Heart left ventricle (tissue), 16 donors: ENCODE measurements at regions of chr6 and their contacts with region 1.

Region 1: DNA sequence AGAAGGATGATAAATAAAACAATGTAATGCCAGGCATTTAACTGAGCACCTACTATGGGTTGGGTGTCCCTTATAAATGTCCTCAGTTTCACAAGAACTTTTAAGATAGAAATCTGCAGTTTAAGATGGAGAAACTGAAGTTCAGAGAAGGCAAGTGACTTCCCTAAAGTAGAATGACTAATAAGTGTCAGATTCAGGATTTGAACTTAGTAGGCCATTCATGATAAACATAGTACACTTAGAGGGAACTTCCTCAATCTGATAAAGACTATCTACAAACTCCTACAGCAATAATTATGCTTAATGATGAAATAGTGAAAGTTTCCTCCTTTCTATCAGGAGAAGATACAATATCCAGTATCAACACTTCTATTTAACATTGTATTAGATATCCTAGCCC is 43.9 kb downstream of the NCR2 start:
- DNase-seq: no peak
- ATAC-seq: no peak
- H3K4me3 ChIP-seq: no peak overlapping the region
- H3K27ac ChIP-seq: no peak overlapping the region
- H3K4me1 ChIP-seq: peaks cover 0 to 16% (median 8%) of the 10 kb centered on the region in 12 donors
- H3K27me3 ChIP-seq: peaks cover 12 to 70% (median 15%) of the 10 kb centered on the region in 9 donors
- CTCF ChIP-seq: no peak
- POLR2A ChIP-seq: no peak

Region 2: DNA sequence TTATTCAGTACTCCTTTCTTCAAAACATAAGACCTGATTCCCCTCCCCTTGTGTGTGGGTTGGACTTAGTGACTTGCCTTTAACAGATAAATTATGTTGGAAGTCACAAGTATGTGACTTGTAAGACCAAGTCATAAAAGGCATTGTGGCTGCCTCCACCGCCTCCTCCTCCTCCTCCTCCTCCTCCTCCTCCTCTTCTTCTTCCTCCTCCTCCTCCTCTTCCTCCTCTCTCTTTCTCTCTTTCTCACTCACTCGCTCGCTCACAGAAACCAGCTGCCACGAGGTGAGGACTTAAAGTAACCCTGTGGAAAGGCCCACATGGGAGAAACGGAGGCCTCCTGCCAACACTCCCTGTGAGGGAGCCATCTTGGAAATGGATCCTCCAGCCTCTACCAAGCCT is 20.1 kb after region 1 on chr6:
- intact Hi-C with region 1: loop called in 1 of 10 experiments (anchors 2 kb)
- DNase-seq: no peak
- ATAC-seq: no peak
- H3K4me3 ChIP-seq: no peak overlapping the region
- H3K27ac ChIP-seq: no peak overlapping the region
- H3K4me1 ChIP-seq: no peaks in the 10 kb centered on the region
- H3K27me3 ChIP-seq: peaks cover 0 to 29% (median 0%) of the 10 kb centered on the region in 9 donors
- CTCF ChIP-seq: no peak
- POLR2A ChIP-seq: no peak